ENCODE measurements at regions of chr9 and their contacts with region 1.

Region 1: DNA sequence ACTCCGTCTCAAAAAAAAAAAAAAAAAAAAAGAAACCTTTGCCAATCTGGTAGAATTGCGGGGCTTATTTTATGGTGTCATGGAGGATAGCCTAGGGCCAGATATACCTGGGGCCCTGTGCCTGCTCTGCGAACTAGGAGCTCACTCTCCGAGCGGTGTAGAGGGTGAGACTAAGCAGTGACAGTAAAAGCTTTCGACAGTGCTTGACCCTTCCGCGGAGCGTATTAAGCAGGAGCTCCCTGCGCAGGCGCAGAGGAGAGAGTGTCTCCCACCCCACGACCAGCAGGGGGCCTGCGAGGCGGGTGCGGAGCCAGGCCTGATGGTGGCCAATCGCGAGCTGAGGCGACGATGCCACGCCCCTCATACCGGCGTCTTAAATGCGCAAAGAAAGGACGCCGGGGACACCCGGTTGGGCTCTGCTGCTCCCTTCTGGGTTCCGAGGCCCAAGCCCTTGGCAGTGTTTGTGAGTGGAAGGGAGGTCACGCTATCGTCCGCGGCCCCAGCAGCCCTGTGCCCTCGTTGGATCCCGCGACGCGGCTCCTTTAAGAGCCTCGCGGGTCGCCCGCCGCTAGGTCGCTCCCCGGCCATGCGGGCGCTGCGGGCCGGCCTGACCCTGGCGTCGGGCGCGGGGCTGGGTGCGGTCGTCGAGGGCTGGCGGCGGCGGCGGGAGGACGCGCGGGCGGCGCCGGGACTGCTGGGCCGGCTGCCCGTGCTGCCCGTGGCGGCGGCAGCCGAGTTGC is at the start of gene ENDOG:
- DNase-seq: peak; percentile 94 to 99 (median 97)
- ATAC-seq: peak; percentile 98
- H3K4me3 ChIP-seq: peak within 1 kb of the TSS; percentile 67
- H3K4me3 Mint-ChIP-seq: peak within 1 kb of the TSS; percentile 84 to 92 (median 91)
- H3K27ac ChIP-seq: peak within 1 kb of the TSS; percentile 72
- H3K27ac Mint-ChIP-seq: peak within 1 kb of the TSS; percentile 79 to 94 (median 87)
- H3K4me1 ChIP-seq: no peaks in the 10 kb centered on the region
- H3K4me1 Mint-ChIP-seq: peaks cover 7 to 29% (median 12%) of the 10 kb centered on the region in 7 donors
- H3K27me3 ChIP-seq: no peaks in the 10 kb centered on the region
- H3K27me3 Mint-ChIP-seq: no peaks in the 10 kb centered on the region
- total RNA-seq, gene ENDOG: 9.4 to 18.3 (median 14.7) TPM

Region 2: DNA sequence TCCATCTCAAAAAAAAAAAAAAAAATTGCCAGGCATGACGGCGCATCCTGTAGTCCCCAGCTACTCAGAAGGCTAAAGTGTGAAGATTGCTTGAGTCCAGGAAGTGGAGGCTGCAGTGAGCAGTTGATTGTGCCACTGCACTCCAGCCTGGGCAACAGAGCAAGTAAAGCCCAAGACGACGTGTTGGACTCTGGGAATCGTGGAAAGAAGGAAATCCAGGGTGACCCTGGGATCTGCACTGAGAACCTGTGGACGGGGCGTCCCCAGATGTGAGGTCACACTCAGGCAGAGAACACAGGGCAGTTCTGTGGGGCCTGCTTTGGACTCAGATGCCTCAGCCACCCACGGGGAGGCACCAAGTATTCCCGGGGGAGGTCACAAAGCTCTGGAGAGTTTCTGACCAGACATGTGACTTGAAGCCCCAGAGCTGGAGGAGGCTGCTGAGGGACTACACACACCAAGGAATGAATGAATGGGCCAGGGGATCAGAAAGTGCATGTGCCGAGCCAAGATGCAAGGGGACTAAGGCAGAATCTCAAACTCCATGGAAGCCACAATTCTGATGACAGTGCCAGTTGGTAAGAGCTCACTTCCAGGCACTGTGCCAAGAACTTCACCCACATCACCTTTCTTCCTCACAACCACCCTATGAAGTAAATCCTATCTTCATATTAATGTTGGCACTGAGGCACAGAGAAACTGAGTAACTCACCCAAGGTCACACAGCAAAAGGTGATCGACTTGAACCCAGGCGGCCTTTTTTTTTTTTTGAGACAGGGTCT is 174.6 kb before region 1 on chr9:
- CTCF ChIA-PET with region 1: no interaction called
- POLR2A ChIA-PET with region 1: no interaction called
- intact Hi-C with region 1: loop called in 1 of 2 experiments (anchors 2 kb)
- DNase-seq: no peak
- ATAC-seq: no peak
- H3K4me3 ChIP-seq: no peak overlapping the region
- H3K4me3 Mint-ChIP-seq: no peak overlapping the region
- H3K27ac ChIP-seq: no peak overlapping the region
- H3K27ac Mint-ChIP-seq: peak overlapping the region in 1 of 9 donors; percentile 60
- H3K4me1 ChIP-seq: no peaks in the 10 kb centered on the region
- H3K4me1 Mint-ChIP-seq: peaks cover 0 to 3% (median 0%) of the 10 kb centered on the region in 7 donors
- H3K27me3 ChIP-seq: no peaks in the 10 kb centered on the region
- H3K27me3 Mint-ChIP-seq: no peaks in the 10 kb centered on the region

Region 3: GRCh38 chr9:128688512-128689292 is 129.6 kb before region 1 on chr9 and contains the start of gene SET:
- CTCF ChIA-PET with region 1: no interaction called
- POLR2A ChIA-PET with region 1: interaction called, 16 read pairs
- intact Hi-C with region 1: loop called in 1 of 2 experiments (anchors 1 kb)
- DNase-seq: peak; percentile 86 to 97 (median 93)
- ATAC-seq: peak; percentile 89
- H3K4me3 ChIP-seq: peak within 1 kb of the TSS; percentile 84
- H3K4me3 Mint-ChIP-seq: peak within 1 kb of the TSS; percentile 86 to 99 (median 90)
- H3K27ac ChIP-seq: peak within 1 kb of the TSS; percentile 85
- H3K27ac Mint-ChIP-seq: peak within 1 kb of the TSS; percentile 87 to 99 (median 97)
- H3K4me1 ChIP-seq: peaks cover 22 to 48% of the 10 kb centered on the region in 2 donors
- H3K4me1 Mint-ChIP-seq: peaks cover 45 to 67% (median 59%) of the 10 kb centered on the region in 7 donors
- H3K27me3 ChIP-seq: no peaks in the 10 kb centered on the region
- H3K27me3 Mint-ChIP-seq: no peaks in the 10 kb centered on the region
- total RNA-seq, gene SET: 222 to 488 (median 270) TPM

Region 4: GRCh38 chr9:128771745-128772519 is 46.3 kb before region 1 on chr9 and contains the start of gene ZER1:
- CTCF ChIA-PET with region 1: no interaction called
- POLR2A ChIA-PET with region 1: interaction called, 7 read pairs
- intact Hi-C with region 1: loop called (anchors 1 kb)
- DNase-seq: peak; percentile 92 to 98 (median 95)
- ATAC-seq: peak; percentile 97
- H3K4me3 ChIP-seq: peak within 1 kb of the TSS; percentile 97
- H3K4me3 Mint-ChIP-seq: peak within 1 kb of the TSS; percentile 95 to 99 (median 98)
- H3K27ac ChIP-seq: peak within 1 kb of the TSS; percentile 93
- H3K27ac Mint-ChIP-seq: peak within 1 kb of the TSS; percentile 93 to 100 (median 100)
- H3K4me1 ChIP-seq: peaks cover 7 to 12% of the 10 kb centered on the region in 2 donors
- H3K4me1 Mint-ChIP-seq: peaks cover 21 to 40% (median 39%) of the 10 kb centered on the region in 7 donors
- H3K27me3 ChIP-seq: no peaks in the 10 kb centered on the region
- H3K27me3 Mint-ChIP-seq: no peaks in the 10 kb centered on the region
- total RNA-seq, gene ZER1: 22.7 to 51.2 (median 34.7) TPM

Region 5: GRCh38 chr9:128829477-128830251 is 11.4 kb after region 1 on chr9 and contains the start of gene SPOUT1:
- CTCF ChIA-PET with region 1: interaction called, 8 read pairs
- POLR2A ChIA-PET with region 1: interaction called, 38 read pairs
- intact Hi-C with region 1: loop called (anchors 1 kb)
- DNase-seq: peak; percentile 86 to 95 (median 92)
- ATAC-seq: peak; percentile 100
- H3K4me3 ChIP-seq: peak within 1 kb of the TSS; percentile 91
- H3K4me3 Mint-ChIP-seq: peak within 1 kb of the TSS; percentile 92 to 99 (median 95)
- H3K27ac ChIP-seq: peak within 1 kb of the TSS; percentile 81
- H3K27ac Mint-ChIP-seq: peak within 1 kb of the TSS; percentile 91 to 97 (median 94)
- H3K4me1 ChIP-seq: peaks cover 8 to 15% of the 10 kb centered on the region in 2 donors
- H3K4me1 Mint-ChIP-seq: peaks cover 14 to 26% (median 19%) of the 10 kb centered on the region in 7 donors
- H3K27me3 ChIP-seq: no peaks in the 10 kb centered on the region
- H3K27me3 Mint-ChIP-seq: no peaks in the 10 kb centered on the region
- total RNA-seq, gene SPOUT1: 38.9 to 83.6 (median 65.2) TPM

Region 6: DNA sequence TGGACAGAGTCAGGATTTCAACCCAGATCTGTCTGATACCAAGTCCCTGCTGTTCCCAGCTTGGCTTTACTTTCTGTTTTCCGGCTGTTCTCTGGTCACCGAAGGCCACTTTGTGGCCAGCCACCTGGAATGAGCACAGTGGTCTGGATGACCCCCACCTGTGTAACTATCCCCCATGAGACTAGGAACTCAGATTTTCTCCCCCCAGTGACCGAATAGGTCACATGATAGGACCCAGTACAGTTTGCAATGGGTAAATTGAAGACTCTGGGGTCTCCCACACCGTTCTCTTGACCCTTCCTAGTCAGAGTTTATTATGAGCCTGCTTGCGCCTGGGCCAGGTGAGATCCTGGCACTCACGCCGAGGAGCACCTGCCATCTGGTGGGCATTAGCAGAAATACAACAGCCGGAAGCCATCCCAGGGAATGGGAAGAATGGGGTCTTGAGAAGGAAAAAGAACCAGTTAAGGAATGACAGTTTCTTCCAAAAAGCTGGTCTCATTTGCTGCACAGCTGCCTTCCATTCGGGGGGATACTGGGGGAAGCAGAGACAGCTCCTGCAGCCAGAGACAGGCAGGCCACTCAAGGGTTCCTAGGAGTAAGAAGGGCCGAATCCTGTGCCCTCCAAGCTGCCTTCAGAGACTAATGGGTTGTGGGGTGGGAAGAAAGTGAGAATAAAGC is 109.6 kb after region 1 on chr9:
- CTCF ChIA-PET with region 1: interaction called, 11 read pairs
- POLR2A ChIA-PET with region 1: interaction called, 3 read pairs
- intact Hi-C with region 1: loop called in 1 of 2 experiments (anchors 1 kb)
- DNase-seq: peak; percentile 24 to 69 (median 46)
- ATAC-seq: peak; percentile 77
- H3K4me3 ChIP-seq: no peak overlapping the region
- H3K4me3 Mint-ChIP-seq: peak overlapping the region in 3 of 10 donors; percentile 11 to 47 (median 39)
- H3K27ac ChIP-seq: no peak overlapping the region
- H3K27ac Mint-ChIP-seq: peak overlapping the region in 8 of 9 donors; percentile 1 to 76 (median 50)
- H3K4me1 ChIP-seq: peaks cover 3 to 6% of the 10 kb centered on the region in 2 donors
- H3K4me1 Mint-ChIP-seq: peaks cover 12 to 22% (median 19%) of the 10 kb centered on the region in 7 donors
- H3K27me3 ChIP-seq: no peaks in the 10 kb centered on the region
- H3K27me3 Mint-ChIP-seq: peaks cover 0 to 3% (median 0%) of the 10 kb centered on the region in 5 donors

Region 7: DNA sequence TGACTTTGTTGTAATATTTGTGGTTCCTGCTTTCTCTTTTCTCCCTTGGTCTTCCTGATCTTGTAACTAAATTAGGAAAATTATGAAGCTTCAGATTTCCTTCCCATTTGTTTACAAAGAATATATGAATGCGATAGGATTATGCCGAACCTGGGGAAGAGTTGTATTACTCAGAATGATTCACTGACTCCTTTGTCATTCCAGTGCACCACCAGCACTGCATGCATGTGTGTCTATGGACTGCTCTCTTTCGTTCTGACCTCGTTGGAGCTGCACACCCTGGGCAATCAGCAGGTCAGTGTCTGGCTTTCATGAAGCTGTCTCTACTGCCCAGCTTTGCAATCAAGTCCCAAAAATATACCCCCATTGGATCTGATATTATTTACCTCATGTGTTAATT is 154.7 kb after region 1 on chr9:
- CTCF ChIA-PET with region 1: no interaction called
- POLR2A ChIA-PET with region 1: no interaction called
- intact Hi-C with region 1: no loop called
- DNase-seq: no peak
- ATAC-seq: no peak
- H3K4me3 ChIP-seq: no peak overlapping the region
- H3K4me3 Mint-ChIP-seq: no peak overlapping the region
- H3K27ac ChIP-seq: no peak overlapping the region
- H3K27ac Mint-ChIP-seq: peak overlapping the region in 1 of 9 donors; percentile 20
- H3K4me1 ChIP-seq: no peaks in the 10 kb centered on the region
- H3K4me1 Mint-ChIP-seq: peaks cover 0 to 10% (median 0%) of the 10 kb centered on the region in 7 donors
- H3K27me3 ChIP-seq: no peaks in the 10 kb centered on the region
- H3K27me3 Mint-ChIP-seq: no peaks in the 10 kb centered on the region

Measured in naive thymus-derived CD4-positive, alpha-beta T cell (primary cell).